A673 (cell line): ENCODE measurements at regions of chr9 and their contacts with region 1.

Region 1: GRCh38 chr9:136096505-136097001 is 1.5 kb upstream of the NACC2 start:
- DNase-seq: no peak
- H3K4me3 ChIP-seq: no peak overlapping the region
- H3K27ac ChIP-seq: no peak overlapping the region
- H3K4me1 ChIP-seq: peaks cover 18% of the 10 kb centered on the region
- H3K27me3 ChIP-seq: no peaks in the 10 kb centered on the region
- CTCF ChIP-seq: no peak

Region 2: GRCh38 chr9:135588886-135589595 is 507.5 kb before region 1 on chr9:
- CTCF ChIA-PET with region 1: no interaction called
- POLR2A ChIA-PET with region 1: no interaction called
- intact Hi-C with region 1: no loop called
- DNase-seq: no peak
- H3K4me3 ChIP-seq: no peak overlapping the region
- H3K27ac ChIP-seq: no peak overlapping the region
- H3K4me1 ChIP-seq: no peaks in the 10 kb centered on the region
- H3K27me3 ChIP-seq: no peaks in the 10 kb centered on the region
- CTCF ChIP-seq: no peak

Region 3: DNA sequence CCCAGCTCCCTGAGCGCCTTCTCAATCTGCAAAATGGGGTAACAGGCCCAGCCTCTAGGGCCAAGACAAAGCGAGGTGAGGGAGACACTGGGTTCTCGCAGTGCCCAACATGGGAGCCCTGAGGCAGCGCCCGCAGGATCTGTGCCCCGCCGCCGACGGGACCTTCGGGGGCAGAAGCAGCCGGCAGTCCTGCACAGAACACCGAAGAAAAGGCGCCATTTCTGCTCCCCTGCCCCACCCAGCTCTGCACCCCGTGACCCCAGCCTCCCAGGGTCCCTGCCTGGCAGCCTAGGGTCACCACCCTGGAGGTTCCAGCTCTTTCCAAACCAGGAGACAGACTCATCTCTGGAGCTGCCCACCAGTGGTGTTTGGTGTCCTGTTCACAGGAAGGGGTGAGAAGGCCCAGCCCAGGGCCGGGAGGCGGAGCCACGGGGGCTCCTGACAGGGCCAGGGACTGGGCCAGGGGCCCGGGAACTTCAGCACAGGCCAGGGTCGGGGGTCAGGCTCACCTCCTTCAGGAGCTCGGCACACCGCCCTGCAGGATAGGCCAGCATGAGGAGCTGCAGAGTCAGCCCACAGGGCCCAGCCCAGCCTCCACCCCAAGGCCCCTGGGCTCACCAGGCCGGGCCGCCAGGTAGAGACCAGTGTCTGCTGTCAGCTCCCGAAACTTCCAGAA is 658.2 kb after region 1 on chr9:
- CTCF ChIA-PET with region 1: interaction called, 10 read pairs
- POLR2A ChIA-PET with region 1: no interaction called
- intact Hi-C with region 1: no loop called
- DNase-seq: no peak
- H3K4me3 ChIP-seq: no peak overlapping the region
- H3K27ac ChIP-seq: no peak overlapping the region
- H3K4me1 ChIP-seq: no peaks in the 10 kb centered on the region
- H3K27me3 ChIP-seq: no peaks in the 10 kb centered on the region
- CTCF ChIP-seq: no peak

Region 4: DNA sequence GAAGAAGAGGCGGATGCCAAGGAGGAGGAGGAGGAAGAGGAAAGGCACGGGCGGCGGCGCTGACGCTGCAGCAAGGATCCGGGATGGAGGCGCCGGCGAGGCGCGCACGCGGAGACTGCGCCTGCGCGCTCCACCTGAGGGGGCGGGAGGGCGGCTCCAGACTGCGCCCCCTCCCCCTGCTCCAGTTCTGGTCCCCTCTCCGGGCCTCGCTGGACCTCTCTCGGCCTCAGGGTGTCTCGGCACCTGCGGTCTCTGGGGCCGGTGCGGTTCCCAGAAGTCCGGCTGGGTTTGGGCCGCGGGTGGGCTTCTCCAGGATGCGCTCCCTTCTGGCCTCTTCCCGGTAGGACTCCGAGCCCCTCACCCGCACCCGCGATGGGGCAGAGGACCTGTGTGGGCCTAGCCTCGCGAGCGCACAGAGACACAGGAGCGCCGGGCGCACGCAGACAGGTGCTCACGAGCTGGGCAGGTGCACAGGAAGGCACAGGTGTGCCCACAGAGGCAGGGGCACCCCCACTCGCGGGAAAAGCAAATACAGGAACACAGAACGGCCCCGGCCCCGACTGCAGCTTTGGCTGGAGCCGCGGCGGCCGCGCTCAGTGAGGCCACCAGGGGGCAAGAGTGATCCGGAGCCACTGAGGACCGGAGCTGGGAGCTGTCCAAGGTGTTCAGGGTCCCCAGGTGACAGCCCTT is 949.7 kb after region 1 on chr9 and contains the start of gene NPDC1:
- CTCF ChIA-PET with region 1: no interaction called
- POLR2A ChIA-PET with region 1: no interaction called
- intact Hi-C with region 1: no loop called
- DNase-seq: peak; percentile 80
- H3K4me3 ChIP-seq: peak within 1 kb of the TSS; percentile 76
- H3K27ac ChIP-seq: peak within 1 kb of the TSS; percentile 27
- H3K4me1 ChIP-seq: peaks cover 24% of the 10 kb centered on the region
- H3K27me3 ChIP-seq: no peaks in the 10 kb centered on the region
- CTCF ChIP-seq: peak; percentile 88
- total RNA-seq, gene NPDC1: 73.9 and 81.4 TPM in 2 replicates